Activated CD4-positive, alpha-beta memory T cell treated with anti-CD3 and anti-CD28 coated beads for 36 hours (primary cell): ENCODE measurements at regions of chr5 and their contacts with region 1.

Region 1: DNA sequence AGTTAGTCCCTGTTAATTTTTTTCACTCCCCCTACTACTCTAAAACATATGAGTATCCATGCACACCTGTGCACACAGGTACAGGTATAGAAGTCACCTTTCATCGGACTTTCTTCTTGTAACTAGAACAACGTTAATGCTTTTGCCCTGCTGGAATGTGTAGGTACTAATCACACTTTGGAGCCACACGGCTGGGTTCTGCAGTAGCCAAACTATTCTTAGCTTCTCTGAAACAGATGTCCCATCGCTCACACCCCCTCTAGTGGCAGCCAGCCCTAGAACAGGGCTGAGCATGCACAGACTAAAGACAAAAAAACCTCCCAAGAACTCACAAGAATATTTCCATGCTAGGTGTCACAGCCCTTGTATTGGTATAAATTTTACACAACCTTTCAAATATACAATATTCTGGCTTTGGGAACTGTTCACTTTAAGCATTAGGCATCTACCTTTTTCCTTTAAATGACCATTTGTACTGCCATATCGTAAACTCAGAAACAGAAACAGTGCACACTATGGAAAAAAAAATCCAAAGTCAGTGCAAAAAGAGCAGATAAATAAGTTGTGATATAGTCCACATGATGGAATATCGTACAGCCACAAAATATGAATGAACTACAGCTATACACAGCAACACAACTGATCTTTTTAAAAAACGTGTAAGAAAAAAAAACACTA is 64.0 kb downstream of the RETREG1 start:
- DNase-seq: peak; percentile 65
- H3K4me3 Mint-ChIP-seq: no peak overlapping the region
- H3K27ac Mint-ChIP-seq: no peak overlapping the region
- H3K4me1 Mint-ChIP-seq: peaks cover 3% of the 10 kb centered on the region
- H3K27me3 Mint-ChIP-seq: no peaks in the 10 kb centered on the region

Region 2: DNA sequence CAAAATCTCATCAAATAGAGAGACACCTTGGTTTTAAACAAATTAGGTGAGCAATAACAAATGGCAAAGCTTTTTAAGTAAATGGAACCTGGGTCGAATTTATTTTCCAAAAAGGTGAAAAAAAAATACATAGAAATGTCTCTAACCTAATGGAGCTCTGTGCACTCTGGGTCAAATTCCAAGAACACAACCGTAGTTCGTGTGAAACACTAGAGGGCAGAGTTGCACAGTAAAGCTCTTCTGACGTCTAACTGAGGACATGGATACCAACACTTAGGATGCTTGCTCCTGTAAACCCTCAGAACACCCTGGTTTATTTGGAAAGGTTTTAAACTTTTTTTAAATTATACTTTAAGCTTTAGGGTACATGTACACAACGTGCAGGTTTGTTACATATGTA is 392.1 kb before region 1 on chr5:
- CTCF ChIA-PET with region 1: interaction called, 7 read pairs
- POLR2A ChIA-PET with region 1: no interaction called
- intact Hi-C with region 1: loop called (anchors 1 kb)
- DNase-seq: peak; percentile 17
- H3K4me3 Mint-ChIP-seq: no peak overlapping the region
- H3K27ac Mint-ChIP-seq: no peak overlapping the region
- H3K4me1 Mint-ChIP-seq: no peaks in the 10 kb centered on the region
- H3K27me3 Mint-ChIP-seq: no peaks in the 10 kb centered on the region

Region 3: DNA sequence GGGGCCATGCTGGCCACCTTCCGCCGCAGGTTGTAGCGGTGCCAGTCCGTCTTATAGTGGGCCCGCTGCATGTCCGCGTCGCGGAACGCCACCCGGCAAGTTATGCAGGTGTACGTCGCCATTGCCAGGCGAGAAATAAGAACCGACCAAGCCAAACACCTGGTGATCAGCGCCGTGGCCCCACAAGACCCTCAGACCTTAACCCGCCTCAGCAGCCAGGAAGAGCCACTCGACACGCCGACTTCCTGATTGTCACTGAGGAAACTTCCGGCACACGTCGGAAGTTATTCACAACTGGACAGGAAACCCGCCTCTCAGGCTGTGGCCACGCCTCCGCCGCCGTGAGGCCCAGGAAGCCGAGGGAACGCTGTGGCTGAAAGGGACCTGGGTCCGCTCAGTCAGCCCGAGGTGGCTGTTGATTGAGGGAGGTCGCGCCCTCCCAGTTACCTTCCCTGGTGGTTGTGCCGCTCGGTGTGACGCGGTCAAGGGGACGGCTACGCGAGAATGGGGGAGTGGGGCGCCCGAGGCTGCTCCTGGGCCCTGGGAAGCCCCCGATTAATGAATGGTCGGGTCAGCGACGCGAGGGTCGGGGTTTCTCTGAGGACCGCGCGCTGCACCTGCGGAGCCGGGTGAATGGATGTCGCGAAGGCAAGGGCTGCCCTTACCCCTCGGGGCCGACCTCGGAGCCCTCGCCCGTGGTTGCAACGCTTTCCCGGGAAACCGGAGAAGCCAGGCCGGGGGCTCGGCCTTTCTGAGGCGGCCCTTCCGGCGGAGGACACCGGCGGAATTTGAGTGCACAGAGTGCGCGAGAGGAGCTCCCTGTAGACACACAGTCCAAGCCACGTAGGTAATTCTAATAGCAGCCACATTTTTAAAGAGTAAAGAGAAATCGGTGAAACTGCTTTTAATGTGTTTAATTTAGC is 87.0 kb before region 1 on chr5 and contains the start of gene ZNF622:
- CTCF ChIA-PET with region 1: interaction called, 3 read pairs
- POLR2A ChIA-PET with region 1: no interaction called
- intact Hi-C with region 1: loop called (anchors 5 kb)
- DNase-seq: peak; percentile 92
- H3K4me3 Mint-ChIP-seq: peak within 1 kb of the TSS; percentile 98
- H3K27ac Mint-ChIP-seq: peak within 1 kb of the TSS; percentile 96
- H3K4me1 Mint-ChIP-seq: peaks cover 74% of the 10 kb centered on the region
- H3K27me3 Mint-ChIP-seq: no peaks in the 10 kb centered on the region
- total RNA-seq, gene ZNF622: 35.6 to 35.9 TPM

Region 4: GRCh38 chr5:16489322-16489791 is 63.4 kb before region 1 on chr5:
- CTCF ChIA-PET with region 1: interaction called, 8 read pairs
- POLR2A ChIA-PET with region 1: no interaction called
- intact Hi-C with region 1: loop called (anchors 1 kb)
- DNase-seq: no peak
- H3K4me3 Mint-ChIP-seq: no peak overlapping the region
- H3K27ac Mint-ChIP-seq: no peak overlapping the region
- H3K4me1 Mint-ChIP-seq: peaks cover 5% of the 10 kb centered on the region
- H3K27me3 Mint-ChIP-seq: no peaks in the 10 kb centered on the region

Region 5: GRCh38 chr5:16656561-16657191 is 103.9 kb after region 1 on chr5:
- CTCF ChIA-PET with region 1: no interaction called
- POLR2A ChIA-PET with region 1: no interaction called
- intact Hi-C with region 1: no loop called
- DNase-seq: no peak
- H3K4me3 Mint-ChIP-seq: no peak overlapping the region
- H3K27ac Mint-ChIP-seq: no peak overlapping the region
- H3K4me1 Mint-ChIP-seq: no peaks in the 10 kb centered on the region
- H3K27me3 Mint-ChIP-seq: peaks cover 6% of the 10 kb centered on the region